A673 (cell line): ENCODE measurements at regions of chr5 and their contacts with region 1.

Region 1: DNA sequence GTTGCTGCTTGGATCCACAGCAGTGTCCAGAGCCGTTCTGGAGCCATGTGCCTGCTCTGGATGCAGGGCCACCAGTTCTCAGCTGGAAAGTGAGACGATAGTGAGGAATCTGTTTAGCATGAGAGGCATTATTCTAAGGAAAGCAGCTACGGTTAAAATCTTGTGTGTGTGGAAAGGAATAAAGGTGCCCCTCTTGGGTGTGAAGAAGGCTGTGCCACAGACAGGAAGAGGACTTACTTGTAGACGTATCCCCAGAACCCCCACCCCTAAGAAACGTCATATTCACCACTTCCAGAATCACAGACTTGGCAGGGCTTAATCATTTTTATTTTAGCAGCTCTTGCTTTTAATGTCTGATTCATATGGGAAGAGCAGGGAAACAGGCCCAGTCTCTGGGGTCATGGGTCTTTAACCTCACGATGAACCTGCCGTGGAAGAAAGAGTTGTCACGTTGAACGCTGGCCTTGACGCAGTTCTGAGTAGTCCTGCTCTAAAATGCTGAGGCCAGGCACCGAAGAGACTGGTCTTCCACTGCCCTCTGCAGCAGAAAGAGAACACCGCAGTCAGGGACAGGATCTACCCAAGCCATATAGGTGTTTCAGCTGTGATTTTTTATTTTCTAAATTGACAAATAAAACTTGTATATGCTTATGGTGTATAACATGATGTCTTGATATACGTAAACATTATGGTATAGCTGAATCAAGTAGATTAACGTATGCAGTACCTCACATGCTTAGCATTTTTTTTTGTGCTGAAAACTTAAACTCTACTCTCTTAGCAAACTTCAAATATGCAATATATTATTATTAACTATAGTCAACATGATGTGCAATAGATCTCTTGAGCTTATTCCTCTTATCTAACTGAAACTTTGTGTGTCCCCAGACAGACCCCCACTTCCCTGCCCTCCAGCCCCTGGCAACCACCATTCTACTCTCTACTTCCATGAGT is 38.8 kb downstream of the CARTPT start:
- DNase-seq: peak; percentile 68
- H3K4me3 ChIP-seq: no peak overlapping the region
- H3K27ac ChIP-seq: no peak overlapping the region
- H3K4me1 ChIP-seq: no peaks in the 10 kb centered on the region
- H3K27me3 ChIP-seq: no peaks in the 10 kb centered on the region
- CTCF ChIP-seq: peak; percentile 84

Region 2: DNA sequence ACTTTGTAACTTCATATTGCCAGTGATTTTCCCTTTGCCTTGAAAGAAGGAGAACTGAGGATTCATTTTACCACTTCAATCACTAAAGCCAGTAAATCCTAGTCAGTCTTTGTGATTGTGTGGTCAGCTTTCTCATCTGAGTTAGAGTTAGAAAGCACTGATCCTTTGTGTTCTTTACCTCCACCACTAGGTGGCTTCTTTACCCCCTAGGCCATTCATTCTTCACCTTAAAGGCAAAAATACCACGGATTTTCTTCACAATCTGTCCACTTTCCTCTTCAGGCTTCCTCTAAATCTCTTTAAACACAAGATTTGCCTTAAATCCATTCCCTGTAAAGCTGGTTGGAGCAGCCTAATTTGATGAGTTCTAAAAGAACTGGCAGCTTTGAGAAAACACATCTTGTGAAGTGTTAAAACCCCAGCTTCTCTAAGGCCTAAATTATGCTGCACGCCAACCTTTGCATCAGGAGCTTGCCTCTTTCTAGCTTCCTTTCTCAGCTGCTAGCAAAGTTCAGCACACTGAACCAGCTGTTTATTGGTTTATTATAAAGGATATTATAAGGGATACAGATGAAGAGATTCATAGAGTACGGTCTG is 282.0 kb before region 1 on chr5:
- CTCF ChIA-PET with region 1: no interaction called
- POLR2A ChIA-PET with region 1: no interaction called
- intact Hi-C with region 1: loop called (anchors 10 kb)
- DNase-seq: peak; percentile 49
- H3K4me3 ChIP-seq: no peak overlapping the region
- H3K27ac ChIP-seq: peak overlapping the region; percentile 10
- H3K4me1 ChIP-seq: no peaks in the 10 kb centered on the region
- H3K27me3 ChIP-seq: no peaks in the 10 kb centered on the region
- CTCF ChIP-seq: peak; percentile 72

Region 3: GRCh38 chr5:71492817-71493615 is 264.9 kb before region 1 on chr5:
- CTCF ChIA-PET with region 1: no interaction called
- POLR2A ChIA-PET with region 1: no interaction called
- intact Hi-C with region 1: no loop called
- DNase-seq: no peak
- H3K4me3 ChIP-seq: no peak overlapping the region
- H3K27ac ChIP-seq: no peak overlapping the region
- H3K4me1 ChIP-seq: no peaks in the 10 kb centered on the region
- H3K27me3 ChIP-seq: no peaks in the 10 kb centered on the region
- CTCF ChIP-seq: no peak

Region 4: DNA sequence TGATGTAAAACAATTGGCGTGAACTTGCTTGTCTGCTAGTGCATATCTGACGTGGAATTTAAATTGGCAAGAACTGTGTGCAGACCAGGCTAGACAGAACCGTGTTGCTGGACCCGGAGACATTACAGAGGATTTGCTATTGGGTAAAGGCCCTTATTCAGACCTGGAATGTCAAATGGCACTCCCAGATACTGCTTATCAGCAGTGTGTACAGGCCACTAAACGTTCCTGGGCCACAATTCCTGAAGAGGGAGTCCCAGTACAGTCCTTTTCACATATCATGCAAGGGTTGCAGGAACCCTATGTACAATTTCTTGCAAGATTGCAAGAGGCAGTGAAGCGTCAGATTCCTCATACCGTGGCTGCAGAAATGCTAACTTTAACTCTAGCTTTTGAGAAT is 184.3 kb before region 1 on chr5:
- CTCF ChIA-PET with region 1: no interaction called
- POLR2A ChIA-PET with region 1: no interaction called
- intact Hi-C with region 1: loop called (anchors 10 kb)
- DNase-seq: no peak
- H3K4me3 ChIP-seq: no peak overlapping the region
- H3K27ac ChIP-seq: no peak overlapping the region
- H3K4me1 ChIP-seq: peaks cover 6% of the 10 kb centered on the region
- H3K27me3 ChIP-seq: no peaks in the 10 kb centered on the region
- CTCF ChIP-seq: no peak

Region 5: GRCh38 chr5:71652803-71653543 is 104.9 kb before region 1 on chr5:
- CTCF ChIA-PET with region 1: no interaction called
- POLR2A ChIA-PET with region 1: no interaction called
- intact Hi-C with region 1: loop called (anchors 5 kb)
- DNase-seq: peak; percentile 81
- H3K4me3 ChIP-seq: no peak overlapping the region
- H3K27ac ChIP-seq: peak overlapping the region; percentile 25
- H3K4me1 ChIP-seq: peaks cover 17% of the 10 kb centered on the region
- H3K27me3 ChIP-seq: no peaks in the 10 kb centered on the region
- CTCF ChIP-seq: no peak